PC-9 (cell line): ENCODE measurements at regions of chr6 and their contacts with region 1.

Region 1: DNA sequence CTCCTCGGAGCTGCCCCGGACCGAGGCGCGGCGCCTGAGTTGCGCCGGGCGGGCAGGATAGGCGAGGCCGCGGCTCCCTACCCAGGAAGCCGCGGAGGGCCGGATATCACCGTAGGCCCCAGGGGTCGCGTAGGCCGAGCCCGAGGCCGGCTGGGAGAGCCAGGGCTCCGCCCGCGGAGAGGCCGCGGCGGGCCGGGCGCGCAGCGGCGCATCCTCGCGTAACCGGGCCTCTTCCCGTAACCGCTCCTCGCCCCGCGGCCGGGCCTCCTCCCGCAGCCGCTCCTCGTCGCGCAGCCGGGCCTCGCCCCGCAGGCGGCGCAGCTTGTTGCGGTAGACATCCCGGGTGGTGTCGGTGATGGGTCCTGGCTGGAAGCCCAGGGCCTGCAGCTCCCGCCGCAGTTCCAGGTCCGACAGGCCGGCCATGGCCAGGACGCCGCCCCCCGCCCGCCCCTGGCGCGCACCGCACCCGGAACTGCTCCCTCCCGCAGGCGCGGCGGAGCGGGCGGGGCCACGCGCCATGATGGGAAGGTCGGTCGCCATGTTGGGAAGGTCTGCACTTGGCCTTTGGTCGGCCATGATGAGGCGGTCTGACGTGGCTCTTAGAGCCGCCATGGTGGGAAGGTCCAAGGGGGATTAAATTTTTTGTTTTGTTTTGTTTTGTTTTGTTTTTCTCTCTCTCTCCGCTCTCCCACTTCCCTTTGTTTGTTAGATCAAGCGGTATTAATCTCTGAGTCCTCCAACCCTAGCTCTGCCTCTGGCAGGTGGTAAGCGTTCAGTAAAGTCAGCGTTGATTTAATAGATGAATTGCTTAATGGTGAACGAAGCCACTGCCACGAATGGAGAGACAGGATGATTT is at the start of gene LEMD2:
- DNase-seq: peak; percentile 66 to 93
- H3K4me3 ChIP-seq: peak within 1 kb of the TSS; percentile 96
- H3K27ac ChIP-seq: peak within 1 kb of the TSS; percentile 57
- H3K4me1 ChIP-seq: peaks cover 18% of the 10 kb centered on the region
- H3K27me3 ChIP-seq: no peaks in the 10 kb centered on the region
- CTCF ChIP-seq: no peak
- total RNA-seq, gene LEMD2: 65.9 and 66.5 TPM in 2 replicates

Region 2: GRCh38 chr6:33761922-33762629 is 26.8 kb before region 1 on chr6:
- CTCF ChIA-PET with region 1: no interaction called
- POLR2A ChIA-PET with region 1: no interaction called
- intact Hi-C with region 1: no loop called
- DNase-seq: peak; percentile 50 to 77
- H3K4me3 ChIP-seq: no peak overlapping the region
- H3K27ac ChIP-seq: no peak overlapping the region
- H3K4me1 ChIP-seq: peaks cover 14% of the 10 kb centered on the region
- H3K27me3 ChIP-seq: no peaks in the 10 kb centered on the region
- CTCF ChIP-seq: peak; percentile 85

Region 3: GRCh38 chr6:33840048-33840926 is 51.4 kb after region 1 on chr6:
- CTCF ChIA-PET with region 1: no interaction called
- POLR2A ChIA-PET with region 1: no interaction called
- intact Hi-C with region 1: loop called (anchors 2 kb)
- DNase-seq: peak; percentile 64 to 95
- H3K4me3 ChIP-seq: no peak overlapping the region
- H3K27ac ChIP-seq: peak overlapping the region; percentile 80
- H3K4me1 ChIP-seq: peaks cover 33% of the 10 kb centered on the region
- H3K27me3 ChIP-seq: no peaks in the 10 kb centered on the region
- CTCF ChIP-seq: no peak

Region 4: DNA sequence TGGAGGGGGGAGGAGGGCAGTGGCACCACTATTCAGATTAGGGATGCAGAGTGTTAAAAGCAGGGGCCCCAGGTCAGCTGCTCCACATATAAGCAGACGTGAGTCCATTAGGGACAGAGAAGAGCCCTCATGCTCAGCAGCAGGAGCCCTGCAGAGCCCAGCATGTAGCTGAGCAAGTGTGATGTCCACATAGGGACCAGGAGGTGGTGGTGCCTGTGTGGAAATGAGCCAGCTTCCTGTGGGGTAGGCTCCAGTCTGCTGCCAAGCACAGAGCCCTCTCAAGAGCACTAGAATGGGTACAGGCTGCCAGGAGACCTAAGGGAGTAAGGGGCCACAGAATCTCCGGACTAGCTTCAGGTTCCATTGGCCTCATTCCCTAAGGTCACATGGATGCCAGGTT is 72.8 kb after region 1 on chr6:
- CTCF ChIA-PET with region 1: no interaction called
- POLR2A ChIA-PET with region 1: no interaction called
- intact Hi-C with region 1: no loop called
- DNase-seq: no peak
- H3K4me3 ChIP-seq: no peak overlapping the region
- H3K27ac ChIP-seq: no peak overlapping the region
- H3K4me1 ChIP-seq: no peaks in the 10 kb centered on the region
- H3K27me3 ChIP-seq: peaks cover 49% of the 10 kb centered on the region
- CTCF ChIP-seq: no peak